Caco-2 (cell line): ENCODE measurements at regions of chr20 and their contacts with region 1.

Region 1: DNA sequence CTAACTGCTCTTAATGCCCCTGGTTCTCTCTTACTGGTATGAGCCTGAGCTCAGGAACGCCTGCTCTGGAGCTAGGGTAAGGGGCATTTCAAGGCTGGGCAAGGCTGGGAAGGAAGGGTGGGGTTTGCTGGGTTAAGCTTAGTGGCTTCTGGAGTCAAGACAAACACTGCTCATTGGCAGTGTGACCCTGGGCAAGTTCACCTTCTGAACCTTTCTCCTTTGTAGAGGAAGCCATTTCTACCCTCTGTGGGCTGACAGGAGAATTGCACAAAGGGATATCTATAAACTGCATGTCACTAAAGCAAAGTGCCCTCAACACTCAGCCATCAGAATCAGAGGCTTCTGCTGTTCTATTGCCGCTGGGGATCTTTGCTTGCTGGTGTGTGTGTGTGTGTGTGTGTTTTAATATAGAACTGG is 20.3 kb upstream of the LRRN4 start:
- DNase-seq: peak; percentile 63 to 66
- H3K4me3 ChIP-seq: no peak overlapping the region
- H3K4me3 Mint-ChIP-seq: no peak overlapping the region
- H3K27ac Mint-ChIP-seq: peak overlapping the region; percentile 60
- H3K4me1 ChIP-seq: peaks cover 35% of the 10 kb centered on the region
- H3K4me1 Mint-ChIP-seq: peaks cover 10% of the 10 kb centered on the region
- H3K27me3 ChIP-seq: no peaks in the 10 kb centered on the region
- H3K27me3 Mint-ChIP-seq: no peaks in the 10 kb centered on the region
- CTCF ChIP-seq: peak; percentile 65 to 69

Region 2: GRCh38 chr20:5950271-5951031 is 123.7 kb before region 1 on chr20 and contains the starts of genes MCM8 and TRMT6:
- CTCF ChIA-PET with region 1: interaction called, 3 read pairs
- POLR2A ChIA-PET with region 1: no interaction called
- intact Hi-C with region 1: loop called (anchors 5 kb)
- DNase-seq: peak; percentile 98 to 99
- H3K4me3 ChIP-seq: peak within 1 kb of the TSS; percentile 60
- H3K4me3 Mint-ChIP-seq: peak within 1 kb of the TSS; percentile 99
- H3K27ac Mint-ChIP-seq: peak within 1 kb of the TSS; percentile 86
- H3K4me1 ChIP-seq: peaks cover 15% of the 10 kb centered on the region
- H3K4me1 Mint-ChIP-seq: no peaks in the 10 kb centered on the region
- H3K27me3 ChIP-seq: no peaks in the 10 kb centered on the region
- H3K27me3 Mint-ChIP-seq: no peaks in the 10 kb centered on the region
- CTCF ChIP-seq: no peak
- total RNA-seq, gene MCM8: 36.4 and 38.4 TPM in 2 replicates
- total RNA-seq, gene TRMT6: 30.0 and 35.5 TPM in 2 replicates

Region 3: DNA sequence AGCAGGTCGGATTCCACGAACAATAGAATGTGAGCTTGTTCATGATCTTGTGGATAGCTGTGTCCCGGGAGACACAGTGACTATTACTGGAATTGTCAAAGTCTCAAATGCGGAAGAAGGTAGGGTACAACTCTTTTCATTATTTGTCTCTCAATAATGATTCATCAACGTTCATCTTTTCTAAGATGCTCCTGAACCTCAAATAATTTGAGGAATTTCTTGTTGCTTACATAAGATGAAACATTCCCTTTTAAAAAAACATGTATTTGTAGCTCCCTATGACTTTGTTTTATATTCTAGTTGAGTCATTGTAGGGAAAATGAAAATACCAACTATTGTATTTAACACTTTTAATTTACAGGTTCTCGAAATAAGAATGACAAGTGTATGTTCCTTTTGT is 106.7 kb before region 1 on chr20:
- CTCF ChIA-PET with region 1: no interaction called
- POLR2A ChIA-PET with region 1: no interaction called
- intact Hi-C with region 1: no loop called
- DNase-seq: no peak
- H3K4me3 ChIP-seq: no peak overlapping the region
- H3K4me3 Mint-ChIP-seq: no peak overlapping the region
- H3K27ac Mint-ChIP-seq: no peak overlapping the region
- H3K4me1 ChIP-seq: peaks cover 11% of the 10 kb centered on the region
- H3K4me1 Mint-ChIP-seq: peaks cover 27% of the 10 kb centered on the region
- H3K27me3 ChIP-seq: no peaks in the 10 kb centered on the region
- H3K27me3 Mint-ChIP-seq: no peaks in the 10 kb centered on the region
- CTCF ChIP-seq: no peak

Region 4: GRCh38 chr20:6008254-6008653 is 65.9 kb before region 1 on chr20:
- CTCF ChIA-PET with region 1: interaction called, 5 read pairs
- POLR2A ChIA-PET with region 1: no interaction called
- intact Hi-C with region 1: loop called (anchors 1 kb)
- DNase-seq: peak in 1 of 2 experiments; percentile 30
- H3K4me3 ChIP-seq: peak overlapping the region; percentile 8; the same call in 1 of the 2 replicates
- H3K4me3 Mint-ChIP-seq: peak overlapping the region; percentile 89
- H3K27ac Mint-ChIP-seq: peak overlapping the region; percentile 75
- H3K4me1 ChIP-seq: peaks cover 12% of the 10 kb centered on the region
- H3K4me1 Mint-ChIP-seq: peaks cover 17% of the 10 kb centered on the region
- H3K27me3 ChIP-seq: no peaks in the 10 kb centered on the region
- H3K27me3 Mint-ChIP-seq: no peaks in the 10 kb centered on the region
- CTCF ChIP-seq: no peak

Region 5: GRCh38 chr20:6044115-6044514 is 30.0 kb before region 1 on chr20:
- CTCF ChIA-PET with region 1: interaction called, 4 read pairs
- POLR2A ChIA-PET with region 1: no interaction called
- intact Hi-C with region 1: loop called (anchors 5 kb)
- DNase-seq: peak; percentile 36 to 57
- H3K4me3 ChIP-seq: no peak overlapping the region
- H3K4me3 Mint-ChIP-seq: no peak overlapping the region
- H3K27ac Mint-ChIP-seq: peak overlapping the region; percentile 29
- H3K4me1 ChIP-seq: no peaks in the 10 kb centered on the region
- H3K4me1 Mint-ChIP-seq: no peaks in the 10 kb centered on the region
- H3K27me3 ChIP-seq: no peaks in the 10 kb centered on the region
- H3K27me3 Mint-ChIP-seq: no peaks in the 10 kb centered on the region
- CTCF ChIP-seq: no peak

Region 6: DNA sequence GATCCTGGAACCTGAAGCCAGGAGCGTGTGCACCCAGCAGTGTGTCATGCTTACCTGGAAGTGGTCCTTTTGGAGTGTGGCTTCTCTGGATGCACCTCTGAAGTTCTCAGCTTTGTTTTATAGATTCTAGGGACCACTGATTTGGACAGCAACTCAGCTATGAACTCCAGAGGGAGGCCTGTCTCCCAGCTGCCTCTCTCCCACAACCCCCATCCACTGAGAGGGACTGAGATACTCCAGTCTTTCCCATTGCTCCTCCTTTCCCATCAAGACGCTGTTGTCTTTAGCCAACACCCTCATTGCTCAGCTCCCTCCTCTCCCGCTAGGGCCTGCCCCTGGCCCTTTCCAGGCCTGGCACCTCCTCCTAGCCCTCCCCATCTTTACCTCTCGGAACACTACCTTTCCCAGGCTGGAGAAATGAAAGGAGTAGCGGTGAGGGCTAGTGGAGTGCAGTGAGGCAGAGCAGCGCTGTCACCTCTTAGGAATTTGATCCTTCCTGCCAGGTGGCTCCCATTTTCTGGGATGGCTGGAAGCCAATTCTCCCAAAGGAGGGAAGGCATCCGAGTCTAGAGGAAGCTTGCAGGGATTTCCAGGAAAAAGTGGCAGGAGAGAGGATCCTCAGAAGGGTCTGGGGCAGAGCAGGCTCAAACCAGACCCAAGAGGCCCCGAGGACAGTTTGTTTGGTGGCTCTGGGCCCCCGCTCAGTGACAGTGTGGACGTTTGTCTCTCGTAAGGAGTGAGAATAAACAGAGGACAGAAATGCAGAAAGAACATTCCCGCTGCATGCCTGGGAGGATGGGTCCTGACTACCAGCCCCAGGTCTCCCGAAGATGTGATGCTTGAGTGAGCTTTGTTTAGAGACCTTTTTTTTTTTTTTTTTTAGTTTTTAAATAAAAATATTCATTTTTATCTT is 20.1 kb before region 1 on chr20 and contains the start of gene LRRN4:
- CTCF ChIA-PET with region 1: interaction called, 6 read pairs
- POLR2A ChIA-PET with region 1: interaction called, 5 read pairs
- intact Hi-C with region 1: loop called (anchors 1 kb)
- DNase-seq: peak; percentile 41 to 74
- H3K4me3 ChIP-seq: peak within 1 kb of the TSS; percentile 71
- H3K4me3 Mint-ChIP-seq: peak within 1 kb of the TSS; percentile 77
- H3K27ac Mint-ChIP-seq: peak within 1 kb of the TSS; percentile 64
- H3K4me1 ChIP-seq: peaks cover 70% of the 10 kb centered on the region
- H3K4me1 Mint-ChIP-seq: peaks cover 49% of the 10 kb centered on the region
- H3K27me3 ChIP-seq: no peaks in the 10 kb centered on the region
- H3K27me3 Mint-ChIP-seq: no peaks in the 10 kb centered on the region
- CTCF ChIP-seq: no peak
- total RNA-seq, gene LRRN4: 17.9 and 19.6 TPM in 2 replicates

Region 7: DNA sequence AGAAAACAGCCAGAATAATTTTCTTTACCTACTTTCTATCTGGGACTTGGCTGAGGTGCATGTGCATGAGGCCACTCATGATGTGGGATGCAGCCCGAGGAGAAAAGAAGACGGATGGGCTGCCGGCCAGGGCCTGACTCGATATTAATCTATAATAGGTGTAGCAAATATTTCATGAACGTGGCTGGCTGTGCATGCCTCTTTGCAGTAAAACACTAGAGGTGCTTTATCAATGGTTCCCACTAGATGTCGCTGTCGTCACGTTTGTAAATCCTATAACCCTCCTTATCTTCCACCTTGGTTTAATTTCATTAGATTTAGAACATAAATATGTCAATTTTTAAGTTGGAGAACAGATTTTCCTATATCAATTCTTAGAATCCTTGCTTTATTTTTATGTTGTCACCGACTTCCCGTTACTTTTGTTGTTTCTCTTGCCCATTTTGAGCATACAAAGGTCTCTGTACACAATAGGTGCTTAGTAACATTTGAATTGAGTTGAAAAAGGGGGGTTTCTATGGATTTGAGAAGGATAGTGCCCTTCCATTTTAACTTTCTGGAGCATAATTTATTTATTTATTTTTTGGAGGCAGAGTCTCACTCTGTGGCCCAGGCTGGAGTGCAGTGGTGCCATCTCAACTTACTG is 68.3 kb after region 1 on chr20:
- CTCF ChIA-PET with region 1: no interaction called
- POLR2A ChIA-PET with region 1: no interaction called
- intact Hi-C with region 1: no loop called
- DNase-seq: peak; percentile 54 to 67
- H3K4me3 ChIP-seq: no peak overlapping the region
- H3K4me3 Mint-ChIP-seq: no peak overlapping the region
- H3K27ac Mint-ChIP-seq: no peak overlapping the region
- H3K4me1 ChIP-seq: no peaks in the 10 kb centered on the region
- H3K4me1 Mint-ChIP-seq: no peaks in the 10 kb centered on the region
- H3K27me3 ChIP-seq: no peaks in the 10 kb centered on the region; the same call in 1 of the 2 replicates
- H3K27me3 Mint-ChIP-seq: peaks cover under 1% of the 10 kb centered on the region
- CTCF ChIP-seq: peak; percentile 71 to 84

Region 8: DNA sequence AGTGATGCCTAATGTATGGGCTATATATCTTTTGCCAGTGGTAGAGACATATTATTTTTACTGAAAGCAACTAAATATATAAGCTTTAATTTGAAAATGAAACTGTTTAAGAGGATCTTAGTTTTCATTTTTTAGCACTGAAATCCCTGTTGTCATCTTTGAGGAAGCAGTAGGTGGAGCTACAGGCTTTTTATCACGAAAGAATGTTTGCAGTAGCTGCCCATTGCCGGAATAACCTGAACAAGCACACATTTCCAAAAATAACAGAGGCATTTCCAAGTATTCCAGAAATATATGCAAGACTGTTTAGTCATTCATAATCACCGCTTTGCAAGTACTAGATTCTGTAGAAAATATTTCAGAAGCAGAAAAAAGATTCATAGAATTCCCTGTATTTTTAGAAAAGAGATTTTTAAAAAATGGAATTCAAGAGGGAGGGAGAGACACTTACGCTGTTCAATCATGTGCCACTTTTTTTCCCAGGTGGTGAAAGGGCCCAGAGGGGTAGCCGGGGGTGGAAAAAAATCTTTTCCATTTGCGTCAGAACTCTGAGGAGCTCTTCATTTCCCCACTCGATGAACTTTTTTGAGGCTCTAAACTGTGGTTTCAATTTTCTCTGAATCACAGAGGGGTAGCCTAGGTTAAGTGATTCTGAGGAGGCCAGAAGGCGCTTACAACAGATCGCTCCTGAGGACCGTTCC is 191.2 kb after region 1 on chr20:
- CTCF ChIA-PET with region 1: no interaction called
- POLR2A ChIA-PET with region 1: no interaction called
- intact Hi-C with region 1: no loop called
- DNase-seq: peak in 1 of 2 experiments; percentile 22
- H3K4me3 ChIP-seq: no peak overlapping the region
- H3K4me3 Mint-ChIP-seq: no peak overlapping the region
- H3K27ac Mint-ChIP-seq: no peak overlapping the region
- H3K4me1 ChIP-seq: no peaks in the 10 kb centered on the region
- H3K4me1 Mint-ChIP-seq: no peaks in the 10 kb centered on the region
- H3K27me3 ChIP-seq: no peaks in the 10 kb centered on the region; the same call in 1 of the 2 replicates
- H3K27me3 Mint-ChIP-seq: peaks cover 10% of the 10 kb centered on the region
- CTCF ChIP-seq: peak; percentile 48 to 62